Right ventricle myocardium superior (tissue), 1 donor: ENCODE measurements at regions of chr10 and their contacts with region 1.

Region 1: DNA sequence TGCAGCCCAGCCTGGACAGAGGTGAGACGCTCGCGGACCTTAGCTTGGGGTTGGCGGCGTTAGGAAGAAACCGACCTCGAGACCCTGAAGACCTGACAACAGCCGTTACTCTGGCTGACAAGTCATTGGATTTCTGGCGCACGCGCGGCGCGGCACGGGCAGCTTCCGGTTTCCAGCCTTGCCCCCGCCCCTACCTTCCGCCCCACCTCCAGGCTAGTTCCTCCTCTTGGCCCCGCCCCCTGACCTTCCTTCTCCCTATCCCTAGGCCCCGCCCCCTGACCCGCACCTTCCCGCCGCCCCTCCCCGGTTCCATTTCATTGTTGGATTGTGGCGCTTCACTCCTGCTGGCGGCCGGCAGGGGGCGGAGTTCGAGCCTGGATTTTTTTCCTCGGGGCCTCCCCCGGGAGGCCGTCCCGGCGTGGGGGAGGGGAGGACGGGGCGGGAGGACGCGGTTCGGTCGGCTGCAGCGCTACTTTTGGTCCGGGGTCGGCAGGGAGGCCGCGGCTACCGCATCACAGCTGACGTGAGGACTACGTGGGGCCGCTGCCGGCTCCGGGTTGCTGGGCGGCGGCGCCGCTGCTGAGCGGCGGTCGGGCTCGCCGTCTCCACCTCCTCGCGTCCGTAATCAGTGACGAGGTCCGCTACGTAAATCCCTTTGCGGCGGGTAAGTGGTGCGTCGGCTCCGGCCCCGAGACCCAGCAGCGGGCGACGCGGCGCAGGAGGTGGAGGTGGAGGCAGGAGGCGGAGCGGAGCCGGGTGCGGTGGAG is at the start of gene CREM:
- DNase-seq: peak; percentile 99
- ATAC-seq: peak; percentile 97
- total RNA-seq, gene CREM: 55.2 TPM

Region 2: DNA sequence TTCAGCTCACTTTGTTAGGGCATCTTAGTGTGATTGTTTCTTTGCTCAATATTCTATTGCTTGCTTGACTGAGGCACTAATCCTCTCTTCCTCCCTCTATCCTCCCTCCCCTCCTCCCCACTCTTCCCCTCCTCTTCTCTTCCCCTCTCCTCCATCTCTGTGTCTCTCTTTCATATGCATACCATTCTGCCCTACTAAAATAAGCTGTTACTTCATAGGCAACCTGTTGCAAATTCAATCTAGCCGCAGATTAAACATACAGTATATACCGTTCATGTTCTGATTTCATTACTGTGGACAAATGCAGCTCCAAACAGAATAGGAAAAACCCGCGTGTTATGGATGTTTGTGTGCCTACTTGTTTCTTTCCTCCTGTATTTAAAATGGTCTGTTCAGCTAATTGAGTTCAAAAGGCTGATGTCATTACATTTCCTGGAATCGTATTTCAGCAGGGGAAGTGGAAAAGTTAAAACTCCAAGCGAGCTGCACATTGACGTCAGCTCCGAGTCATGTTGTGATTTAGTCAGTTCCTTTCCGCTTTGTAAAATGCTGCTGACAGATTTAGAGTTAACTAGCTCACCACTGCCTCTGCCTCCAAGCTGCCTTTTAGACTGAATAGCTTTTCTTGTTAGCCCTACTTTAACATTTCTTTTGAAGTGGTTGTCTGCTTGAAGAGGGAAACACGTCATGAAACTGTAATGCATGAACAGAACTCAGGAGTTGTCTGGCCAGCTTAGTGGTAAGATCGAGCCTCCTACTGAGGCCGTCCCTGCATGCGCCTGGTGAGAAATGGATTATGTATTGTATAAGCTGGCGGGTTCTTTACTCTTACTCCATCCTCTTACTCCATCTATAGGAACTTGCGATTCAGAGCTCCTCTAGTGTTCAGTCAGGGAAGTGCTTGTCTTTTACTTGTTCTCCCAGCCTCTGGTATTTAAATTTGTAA is 68.9 kb after region 1 on chr10:
- intact Hi-C with region 1: loop called (anchors 5 kb)
- DNase-seq: peak; percentile 66
- ATAC-seq: peak; percentile 91

Region 3: GRCh38 chr10:35218339-35218955 is 91.7 kb after region 1 on chr10:
- intact Hi-C with region 1: loop called (anchors 2 kb)
- DNase-seq: peak; percentile 83
- ATAC-seq: peak; percentile 69